ENCODE measurements at regions of chr15 and their contacts with region 1.

Region 1: GRCh38 chr15:70376929-70377691 is 279.4 kb upstream of the TLE3 start:
- DNase-seq: no peak
- ATAC-seq: peak; percentile 46
- H3K4me3 Mint-ChIP-seq: peak overlapping the region; percentile 80
- H3K27ac Mint-ChIP-seq: no peak overlapping the region
- H3K4me1 Mint-ChIP-seq: peaks cover 34% of the 10 kb centered on the region
- H3K27me3 Mint-ChIP-seq: peaks cover 7% of the 10 kb centered on the region; the same call in 1 of the 2 replicates
- CTCF ChIP-seq: no peak

Region 2: DNA sequence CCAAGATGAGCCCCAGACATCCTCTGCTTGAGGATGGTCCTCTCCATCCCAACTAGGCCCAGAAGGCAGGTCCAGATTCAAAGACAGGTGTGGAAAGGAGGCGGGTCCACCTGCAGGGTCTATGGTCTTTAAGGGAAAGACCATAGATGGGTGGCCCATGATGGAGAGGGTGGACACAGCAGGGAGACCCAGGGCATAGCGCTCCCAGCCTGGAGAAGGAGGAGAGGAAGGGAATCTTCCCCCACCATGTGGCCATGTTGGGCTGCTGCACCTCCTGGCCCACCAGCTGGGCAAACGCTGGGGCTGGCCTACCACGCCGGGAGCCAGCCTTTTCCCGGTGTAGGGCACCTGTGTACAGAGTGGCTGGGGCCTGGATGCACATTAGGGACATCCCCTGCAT is 14.2 kb before region 1 on chr15:
- CTCF ChIA-PET with region 1: interaction called, 12 read pairs
- POLR2A ChIA-PET with region 1: no interaction called
- DNase-seq: peak; percentile 72
- ATAC-seq: peak; percentile 94
- H3K4me3 Mint-ChIP-seq: no peak overlapping the region
- H3K27ac Mint-ChIP-seq: no peak overlapping the region
- H3K4me1 Mint-ChIP-seq: peaks cover 4% of the 10 kb centered on the region; the same call in 1 of the 2 replicates
- H3K27me3 Mint-ChIP-seq: no peaks in the 10 kb centered on the region
- CTCF ChIP-seq: peak; percentile 27; the same call in 1 of the 2 replicates

Region 3: DNA sequence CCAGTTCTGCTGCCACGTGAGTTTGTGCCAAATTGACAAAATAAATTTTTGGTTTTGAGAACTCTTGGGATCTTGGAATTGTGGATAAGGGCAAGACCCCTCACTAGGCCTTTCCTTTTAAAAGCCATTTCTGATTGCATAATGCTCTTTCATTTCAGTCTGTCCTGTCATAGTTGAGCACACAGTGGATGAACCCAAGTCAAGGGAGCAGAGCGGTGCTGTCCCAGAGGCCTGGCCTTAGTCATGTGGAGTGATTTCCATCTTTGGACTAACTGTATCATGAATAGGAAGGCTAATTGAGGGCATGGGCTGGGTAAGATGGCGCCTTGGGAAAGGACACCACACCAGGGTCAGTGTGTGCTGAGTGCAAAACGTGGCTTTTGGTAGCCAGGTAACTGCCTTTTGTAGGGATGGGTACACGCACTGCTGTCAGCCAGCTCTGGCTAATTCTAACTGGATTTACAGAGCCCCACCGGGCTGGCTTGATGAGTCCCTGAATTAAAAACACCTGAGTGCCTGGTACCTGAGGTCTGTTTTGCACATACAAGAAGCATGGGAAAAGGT is 82.3 kb after region 1 on chr15:
- CTCF ChIA-PET with region 1: no interaction called
- POLR2A ChIA-PET with region 1: no interaction called
- DNase-seq: no peak
- ATAC-seq: no peak
- H3K4me3 Mint-ChIP-seq: no peak overlapping the region
- H3K27ac Mint-ChIP-seq: no peak overlapping the region
- H3K4me1 Mint-ChIP-seq: no peaks in the 10 kb centered on the region; the same call in 1 of the 2 replicates
- H3K27me3 Mint-ChIP-seq: peaks cover 4% of the 10 kb centered on the region
- CTCF ChIP-seq: no peak